ENCODE measurements at regions of chr20 and their contacts with region 1.

Region 1: GRCh38 chr20:10447027-10447426 is 11.9 kb downstream of the SLX4IP start:
- DNase-seq: peak; percentile 82
- H3K4me3 Mint-ChIP-seq: peak overlapping the region; percentile 65
- H3K27ac Mint-ChIP-seq: peak overlapping the region; percentile 76
- H3K4me1 Mint-ChIP-seq: peaks cover 25% of the 10 kb centered on the region
- H3K27me3 Mint-ChIP-seq: no peaks in the 10 kb centered on the region

Region 2: GRCh38 chr20:10521068-10521831 is 74.2 kb after region 1 on chr20:
- intact Hi-C with region 1: loop called (anchors 2 kb)
- DNase-seq: no peak
- H3K4me3 Mint-ChIP-seq: peak overlapping the region; percentile 3
- H3K27ac Mint-ChIP-seq: peak overlapping the region; percentile 72
- H3K4me1 Mint-ChIP-seq: peaks cover 25% of the 10 kb centered on the region
- H3K27me3 Mint-ChIP-seq: no peaks in the 10 kb centered on the region

Region 3: DNA sequence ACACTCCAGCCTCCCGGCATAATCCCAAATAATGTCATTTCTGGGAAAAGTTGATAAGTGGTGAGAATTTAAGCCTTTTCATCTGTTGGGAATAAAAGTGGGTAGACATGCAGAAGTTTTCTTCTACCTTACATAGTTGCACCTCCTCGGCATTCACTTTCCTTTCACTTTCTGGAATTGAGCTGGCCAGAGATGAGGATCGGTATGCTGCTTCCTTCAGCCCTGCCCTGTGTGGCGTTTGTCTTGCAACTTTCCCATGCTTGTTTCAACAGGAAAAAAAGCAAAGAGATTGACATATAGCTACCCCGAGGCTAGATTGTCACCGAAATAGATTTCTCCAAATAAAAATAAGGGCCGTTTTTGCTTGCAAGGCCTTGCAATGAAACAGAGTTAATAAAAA is 292.5 kb after region 1 on chr20:
- intact Hi-C with region 1: no loop called
- DNase-seq: no peak
- H3K4me3 Mint-ChIP-seq: no peak overlapping the region
- H3K27ac Mint-ChIP-seq: no peak overlapping the region
- H3K4me1 Mint-ChIP-seq: no peaks in the 10 kb centered on the region
- H3K27me3 Mint-ChIP-seq: peaks cover 4% of the 10 kb centered on the region